ENCODE measurements at regions of chr1 and their contacts with region 1.

Region 1: GRCh38 chr1:240189386-240189989 is 97.8 kb downstream of the FMN2 start:
- DNase-seq: peak; percentile 37
- CTCF ChIP-seq: peak; percentile 66

Region 2: GRCh38 chr1:240199758-240200645 is 10.5 kb after region 1 on chr1:
- CTCF ChIA-PET with region 1: interaction called, 13 read pairs
- POLR2A ChIA-PET with region 1: no interaction called
- DNase-seq: no peak
- CTCF ChIP-seq: no peak